ENCODE measurements at regions of chr2 and their contacts with region 1.

Region 1: DNA sequence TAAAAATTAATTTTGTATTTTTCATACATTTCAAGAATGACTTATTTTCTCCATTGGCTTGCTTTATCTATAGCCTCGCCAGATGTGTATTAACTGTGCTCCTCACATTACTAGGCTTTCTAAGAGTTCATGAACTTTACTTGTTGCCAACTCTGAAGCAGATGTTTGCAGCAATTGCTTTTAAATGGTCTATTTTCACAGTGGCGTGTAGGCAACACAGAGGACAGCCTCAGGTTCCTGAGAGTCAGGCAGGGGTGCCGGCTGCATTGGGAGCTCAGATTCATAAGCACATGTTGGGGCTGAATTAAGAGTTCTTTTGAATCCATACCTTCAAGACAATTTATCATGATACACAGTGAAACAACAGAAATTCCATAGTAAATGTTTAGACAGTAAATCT is 179.2 kb upstream of the PXDN start:
- DNase-seq: no peak
- H3K4me3 ChIP-seq: no peak overlapping the region
- H3K27ac ChIP-seq: peak overlapping the region in 1 of 2 experiments; percentile 50; a peak in 1 of 4 replicates
- H3K4me1 ChIP-seq: peaks cover 0 to 17% of the 10 kb centered on the region in 2 experiments; a peak in 2 of 4 replicates
- H3K27me3 ChIP-seq: no peaks in the 10 kb centered on the region
- CTCF ChIP-seq: no peak
- EP300 ChIP-seq: no peak
- RAD21 ChIP-seq: no peak

Region 2: GRCh38 chr2:1910592-1911246 is 12.8 kb before region 1 on chr2:
- CTCF ChIA-PET with region 1: interaction called, 11 read pairs
- POLR2A ChIA-PET with region 1: no interaction called
- DNase-seq: peak; percentile 61
- H3K4me3 ChIP-seq: no peak overlapping the region
- H3K27ac ChIP-seq: peak overlapping the region in 1 of 2 experiments; percentile 4; a peak in 1 of 4 replicates
- H3K4me1 ChIP-seq: peaks cover 0 to 25% of the 10 kb centered on the region in 2 experiments; a peak in 1 of 4 replicates
- H3K27me3 ChIP-seq: no peaks in the 10 kb centered on the region
- CTCF ChIP-seq: no peak; the same call in 1 of the 2 replicates
- EP300 ChIP-seq: no peak
- RAD21 ChIP-seq: peak; percentile 68

Region 3: DNA sequence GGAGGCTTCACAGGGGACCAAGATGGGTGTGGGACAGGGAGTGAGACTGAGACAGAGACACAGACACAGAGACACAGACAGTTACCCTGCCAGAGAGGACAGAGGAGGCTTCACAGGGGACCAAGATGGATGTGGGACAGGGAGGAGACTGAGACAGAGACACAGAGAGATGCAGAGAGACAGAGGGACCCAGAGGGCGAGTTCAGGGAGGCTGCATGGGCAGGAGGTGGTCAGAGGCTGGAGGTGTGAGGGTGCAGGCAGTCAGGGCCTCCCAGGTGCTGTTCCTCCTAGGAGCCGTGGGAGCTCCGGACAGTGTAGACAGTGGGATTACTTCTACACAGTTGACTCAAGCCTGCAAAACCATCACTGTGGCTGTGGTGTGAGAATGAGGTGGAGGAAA is 26.9 kb after region 1 on chr2:
- CTCF ChIA-PET with region 1: no interaction called
- POLR2A ChIA-PET with region 1: no interaction called
- DNase-seq: no peak
- H3K4me3 ChIP-seq: no peak overlapping the region
- H3K27ac ChIP-seq: no peak overlapping the region
- H3K4me1 ChIP-seq: no peaks in the 10 kb centered on the region
- H3K27me3 ChIP-seq: no peaks in the 10 kb centered on the region
- CTCF ChIP-seq: no peak
- EP300 ChIP-seq: no peak
- RAD21 ChIP-seq: no peak

Measured in SK-N-SH (cell line).